B cell (primary cell): ENCODE measurements at regions of chr15 and their contacts with region 1.

Region 1: DNA sequence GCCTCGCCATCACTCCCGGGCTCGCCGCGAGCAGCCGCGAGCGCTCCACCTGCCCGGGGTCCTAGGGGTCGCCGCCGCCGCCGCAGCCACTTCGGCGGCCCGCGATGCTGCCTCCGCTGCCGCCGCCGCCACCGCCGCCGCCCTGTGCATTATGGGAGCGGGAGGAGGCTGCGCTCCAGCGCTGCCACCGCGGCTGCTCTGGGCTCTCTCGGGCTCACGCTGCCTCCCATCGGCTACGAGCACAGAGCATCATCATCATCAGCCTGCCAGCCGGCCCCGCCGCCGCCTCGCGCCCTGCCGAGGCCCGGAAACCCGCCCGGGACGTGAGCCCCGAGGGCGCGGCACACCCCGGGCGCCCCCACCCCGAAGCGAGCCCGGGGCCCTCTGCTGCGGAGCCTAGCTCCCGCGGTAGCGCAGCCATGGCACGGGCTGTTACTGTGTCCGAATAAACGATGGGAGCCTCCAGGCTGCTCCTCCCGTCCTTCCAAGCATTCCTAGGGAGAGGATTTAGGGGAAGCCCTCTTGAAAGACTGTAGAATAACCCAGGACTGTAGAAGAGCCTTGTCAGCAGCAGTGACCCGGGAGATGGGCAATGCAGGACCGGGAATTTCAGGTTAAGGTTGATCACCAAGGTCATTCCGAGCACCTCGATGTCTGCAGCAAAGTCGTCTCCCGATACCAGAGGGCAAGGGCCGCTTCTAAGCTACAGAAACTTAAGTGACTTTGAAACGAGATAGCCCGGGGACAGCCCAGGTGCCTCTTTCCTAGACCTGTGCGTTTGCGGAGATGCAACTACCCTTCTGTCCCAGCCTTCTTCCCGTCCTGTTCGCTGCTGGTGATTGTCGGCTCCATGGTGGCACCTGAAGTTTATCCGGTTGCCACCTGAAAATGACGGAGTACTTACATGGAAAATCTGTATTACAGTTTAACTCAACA is 579 bp upstream of the MYO5A start:
- DNase-seq: peak; percentile 92
- ATAC-seq: peak; percentile 79
- H3K4me3 ChIP-seq: peak overlapping the region; percentile 51 to 80 (median 71)
- H3K4me3 Mint-ChIP-seq: peak overlapping the region; percentile 81
- H3K27ac ChIP-seq: peak overlapping the region; percentile 73 to 90
- H3K27ac Mint-ChIP-seq: peak overlapping the region; percentile 92
- H3K4me1 ChIP-seq: peaks cover 11 to 18% of the 10 kb centered on the region in 2 donors
- H3K4me1 Mint-ChIP-seq: peaks cover 27% of the 10 kb centered on the region
- H3K27me3 ChIP-seq: no peaks in the 10 kb centered on the region
- H3K27me3 Mint-ChIP-seq: no peaks in the 10 kb centered on the region
- CTCF ChIP-seq: no peak

Region 2: GRCh38 chr15:52234596-52235541 is 294.4 kb before region 1 on chr15:
- CTCF ChIA-PET with region 1: no interaction called
- POLR2A ChIA-PET with region 1: no interaction called
- intact Hi-C with region 1: loop called (anchors 2 kb)
- DNase-seq: peak; percentile 81
- ATAC-seq: peak; percentile 57
- H3K4me3 ChIP-seq: peak overlapping the region in 3 of 5 experiments; percentile 3 to 54 (median 10)
- H3K4me3 Mint-ChIP-seq: peak overlapping the region; percentile 92
- H3K27ac ChIP-seq: peak overlapping the region; percentile 89 to 97
- H3K27ac Mint-ChIP-seq: peak overlapping the region; percentile 99
- H3K4me1 ChIP-seq: peaks cover 72 to 79% of the 10 kb centered on the region in 2 donors
- H3K4me1 Mint-ChIP-seq: peaks cover 75% of the 10 kb centered on the region
- H3K27me3 ChIP-seq: no peaks in the 10 kb centered on the region
- H3K27me3 Mint-ChIP-seq: no peaks in the 10 kb centered on the region
- CTCF ChIP-seq: no peak

Region 3: DNA sequence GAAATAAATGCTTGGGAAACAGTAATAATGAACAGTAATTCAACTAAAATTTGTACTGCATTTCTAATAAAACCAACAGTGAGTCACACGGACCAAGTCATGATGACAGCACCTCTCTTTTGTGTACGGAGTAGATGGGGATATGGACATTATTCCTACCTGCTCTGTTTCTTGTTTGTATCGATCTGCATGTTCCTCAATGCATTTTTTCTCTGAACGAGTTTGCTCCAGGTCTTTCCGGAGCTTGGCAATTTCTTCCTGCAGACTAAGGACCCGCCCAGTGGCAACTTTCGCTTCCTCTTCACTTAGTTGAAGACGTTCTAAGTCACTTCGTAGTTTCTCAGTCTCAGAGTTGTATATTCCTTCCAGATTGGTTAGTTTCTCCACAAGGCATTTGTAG is 159.2 kb before region 1 on chr15:
- CTCF ChIA-PET with region 1: no interaction called
- POLR2A ChIA-PET with region 1: no interaction called
- intact Hi-C with region 1: loop called (anchors 5 kb)
- DNase-seq: peak; percentile 44
- ATAC-seq: peak; percentile 57
- H3K4me3 ChIP-seq: peak overlapping the region in 1 of 5 experiments; percentile 8
- H3K4me3 Mint-ChIP-seq: peak overlapping the region; percentile 72
- H3K27ac ChIP-seq: peak overlapping the region in 1 of 2 donors; percentile 66
- H3K27ac Mint-ChIP-seq: peak overlapping the region; percentile 76
- H3K4me1 ChIP-seq: peaks cover 0 to 2% of the 10 kb centered on the region in 2 donors
- H3K4me1 Mint-ChIP-seq: peaks cover 9% of the 10 kb centered on the region
- H3K27me3 ChIP-seq: no peaks in the 10 kb centered on the region
- H3K27me3 Mint-ChIP-seq: no peaks in the 10 kb centered on the region
- CTCF ChIP-seq: no peak

Region 4: GRCh38 chr15:52481915-52482314 is 47.3 kb before region 1 on chr15:
- CTCF ChIA-PET with region 1: no interaction called
- POLR2A ChIA-PET with region 1: no interaction called
- intact Hi-C with region 1: loop called (anchors 5 kb)
- DNase-seq: peak; percentile 80
- ATAC-seq: peak; percentile 99
- H3K4me3 ChIP-seq: peak overlapping the region in 2 of 5 experiments; percentile 1 to 24
- H3K4me3 Mint-ChIP-seq: peak overlapping the region; percentile 1
- H3K27ac ChIP-seq: peak overlapping the region; percentile 39 to 63
- H3K27ac Mint-ChIP-seq: peak overlapping the region; percentile 18
- H3K4me1 ChIP-seq: peaks cover 37 to 42% of the 10 kb centered on the region in 2 donors
- H3K4me1 Mint-ChIP-seq: peaks cover 50% of the 10 kb centered on the region
- H3K27me3 ChIP-seq: no peaks in the 10 kb centered on the region
- H3K27me3 Mint-ChIP-seq: no peaks in the 10 kb centered on the region
- CTCF ChIP-seq: no peak

Region 5: DNA sequence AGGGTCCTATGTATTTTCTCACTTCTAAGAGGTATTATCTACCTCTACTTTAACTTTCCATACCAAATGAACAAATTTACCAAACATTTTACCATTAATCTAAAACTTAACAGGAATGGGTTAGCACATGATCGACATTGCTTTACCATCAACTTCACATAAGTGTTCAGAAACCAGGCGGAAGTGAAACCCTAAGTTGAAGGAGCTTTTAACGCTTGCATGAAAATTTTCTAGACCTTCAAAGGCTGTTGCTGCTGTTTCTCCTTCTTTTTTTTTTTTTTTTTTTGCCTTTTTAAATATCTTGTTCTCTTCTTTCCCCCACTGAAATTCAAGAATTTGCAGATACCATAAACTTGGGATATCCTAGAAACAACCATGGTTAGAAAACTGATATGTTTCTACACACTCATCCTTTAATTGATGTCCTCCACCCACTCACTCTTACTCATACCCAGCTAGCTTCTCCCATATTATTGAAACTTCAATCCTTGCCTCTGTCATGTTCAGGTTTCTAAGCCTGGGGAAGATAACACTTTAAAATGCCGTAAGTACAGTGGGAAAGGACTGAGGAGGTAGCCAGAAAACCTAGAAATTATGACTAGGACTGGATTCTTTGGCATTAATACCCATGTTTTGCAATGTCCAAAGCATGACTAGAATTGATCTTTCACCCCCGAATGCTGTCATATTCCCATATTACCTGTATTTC is 25.3 kb before region 1 on chr15:
- CTCF ChIA-PET with region 1: interaction called, 4 read pairs
- POLR2A ChIA-PET with region 1: interaction called, 4 read pairs
- intact Hi-C with region 1: loop called (anchors 2 kb)
- DNase-seq: peak; percentile 76
- ATAC-seq: peak; percentile 89
- H3K4me3 ChIP-seq: peak overlapping the region in 1 of 5 experiments; percentile 39
- H3K4me3 Mint-ChIP-seq: peak overlapping the region; percentile 65
- H3K27ac ChIP-seq: peak overlapping the region in 1 of 2 donors; percentile 10
- H3K27ac Mint-ChIP-seq: peak overlapping the region; percentile 76
- H3K4me1 ChIP-seq: peaks cover 14 to 20% of the 10 kb centered on the region in 2 donors
- H3K4me1 Mint-ChIP-seq: peaks cover 44% of the 10 kb centered on the region
- H3K27me3 ChIP-seq: no peaks in the 10 kb centered on the region
- H3K27me3 Mint-ChIP-seq: no peaks in the 10 kb centered on the region
- CTCF ChIP-seq: no peak

Region 6: GRCh38 chr15:52730173-52730572 is 200.9 kb after region 1 on chr15:
- CTCF ChIA-PET with region 1: no interaction called
- POLR2A ChIA-PET with region 1: no interaction called
- intact Hi-C with region 1: no loop called
- DNase-seq: peak; percentile 80
- ATAC-seq: peak; percentile 97
- H3K4me3 ChIP-seq: no peak overlapping the region
- H3K4me3 Mint-ChIP-seq: peak overlapping the region; percentile 64
- H3K27ac ChIP-seq: peak overlapping the region; percentile 46 to 60
- H3K27ac Mint-ChIP-seq: peak overlapping the region; percentile 91
- H3K4me1 ChIP-seq: peaks cover 26 to 31% of the 10 kb centered on the region in 2 donors
- H3K4me1 Mint-ChIP-seq: peaks cover 31% of the 10 kb centered on the region
- H3K27me3 ChIP-seq: no peaks in the 10 kb centered on the region
- H3K27me3 Mint-ChIP-seq: no peaks in the 10 kb centered on the region
- CTCF ChIP-seq: peak; percentile 49

Region 7: DNA sequence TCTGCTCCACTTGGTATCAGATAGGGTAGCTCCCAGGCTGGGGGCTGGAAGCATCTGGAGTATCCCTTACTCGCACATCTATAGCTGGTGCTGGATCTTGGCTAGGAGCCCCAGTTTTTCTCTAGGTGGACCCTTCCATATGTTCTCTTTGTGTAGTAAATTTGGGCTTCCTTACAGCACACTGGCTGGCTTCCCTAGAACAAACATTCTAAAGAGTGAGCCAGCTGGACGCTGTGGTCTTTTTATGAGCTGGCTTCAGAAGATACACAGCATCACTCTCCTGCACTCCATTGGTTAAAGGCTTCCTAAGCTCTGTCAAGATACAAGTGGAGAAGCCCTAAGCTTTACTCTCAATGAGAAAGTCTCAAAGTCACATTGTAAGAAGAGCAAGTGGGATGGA is 908.1 kb after region 1 on chr15:
- CTCF ChIA-PET with region 1: no interaction called
- POLR2A ChIA-PET with region 1: no interaction called
- intact Hi-C with region 1: no loop called
- DNase-seq: no peak
- ATAC-seq: no peak
- H3K4me3 ChIP-seq: no peak overlapping the region
- H3K4me3 Mint-ChIP-seq: no peak overlapping the region
- H3K27ac ChIP-seq: no peak overlapping the region
- H3K27ac Mint-ChIP-seq: no peak overlapping the region
- H3K4me1 ChIP-seq: no peaks in the 10 kb centered on the region
- H3K4me1 Mint-ChIP-seq: no peaks in the 10 kb centered on the region
- H3K27me3 ChIP-seq: no peaks in the 10 kb centered on the region
- H3K27me3 Mint-ChIP-seq: no peaks in the 10 kb centered on the region
- CTCF ChIP-seq: no peak